ENCODE measurements at regions of chr14 and their contacts with region 1.

Region 1: DNA sequence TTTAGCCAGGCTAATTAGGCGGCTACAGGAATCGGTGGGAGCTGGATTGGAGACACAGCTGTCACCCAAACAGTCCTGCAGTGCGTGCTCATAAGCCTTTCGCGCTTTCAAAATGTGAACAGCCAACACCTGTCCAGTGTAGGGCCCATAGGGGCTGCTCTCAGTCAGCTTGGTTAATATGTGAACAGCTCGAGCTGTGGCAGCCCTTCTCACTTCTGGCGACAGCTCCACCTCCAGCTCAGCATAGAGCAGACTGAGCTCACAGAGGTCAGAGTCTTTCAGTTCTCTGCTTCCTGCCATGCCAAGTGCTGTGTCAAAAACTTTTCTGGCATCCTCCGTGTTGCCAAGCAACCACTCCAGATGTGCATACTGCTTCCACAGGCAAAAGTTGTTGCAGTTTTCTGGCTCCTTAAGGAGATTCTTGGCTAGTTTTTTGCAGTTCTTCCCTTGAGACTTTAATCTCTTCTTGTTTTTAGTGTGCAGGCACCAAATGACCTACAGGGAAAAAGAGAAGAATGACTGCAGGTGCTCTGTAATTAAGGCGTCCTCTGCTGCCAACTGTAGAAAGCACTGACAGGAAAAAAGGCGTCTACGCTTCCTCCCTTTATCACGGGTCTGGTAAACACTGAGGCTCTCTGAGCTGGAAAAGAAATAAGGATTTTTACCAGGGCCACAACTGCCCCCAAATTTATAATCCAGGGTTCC is 32.5 kb downstream of the PSMC1 start:
- DNase-seq: peak; percentile 38
- CTCF ChIP-seq: no peak

Region 2: DNA sequence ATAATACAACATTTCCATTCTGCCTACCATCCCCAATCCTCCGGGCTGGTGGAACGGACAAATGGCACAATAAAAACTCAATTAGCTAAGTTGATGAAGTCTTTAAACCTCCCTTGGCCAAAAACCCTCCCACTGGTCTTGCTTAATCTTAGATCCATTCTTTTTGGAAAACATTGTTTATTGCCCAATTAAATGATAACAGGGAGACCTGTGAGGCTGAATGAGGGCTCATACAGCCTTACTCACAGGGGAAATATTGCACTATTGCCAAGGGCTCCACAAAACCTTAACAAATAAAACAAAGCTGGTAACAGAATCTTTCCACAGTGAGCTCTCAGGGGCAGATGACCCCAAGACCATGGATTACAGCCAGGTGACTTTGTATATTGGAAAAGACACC is 40.2 kb before region 1 on chr14:
- CTCF ChIA-PET with region 1: no interaction called
- POLR2A ChIA-PET with region 1: interaction called, 10 read pairs
- DNase-seq: no peak
- CTCF ChIP-seq: no peak

Region 3: GRCh38 chr14:90301668-90302090 is 12.9 kb after region 1 on chr14:
- CTCF ChIA-PET with region 1: interaction called, 11 read pairs
- POLR2A ChIA-PET with region 1: no interaction called
- DNase-seq: no peak
- CTCF ChIP-seq: peak; percentile 41

Region 4: GRCh38 chr14:90331497-90332435 is 43.0 kb after region 1 on chr14 and contains the start of gene NRDE2:
- CTCF ChIA-PET with region 1: no interaction called
- POLR2A ChIA-PET with region 1: no interaction called
- DNase-seq: peak; percentile 96
- CTCF ChIP-seq: no peak

Region 5: DNA sequence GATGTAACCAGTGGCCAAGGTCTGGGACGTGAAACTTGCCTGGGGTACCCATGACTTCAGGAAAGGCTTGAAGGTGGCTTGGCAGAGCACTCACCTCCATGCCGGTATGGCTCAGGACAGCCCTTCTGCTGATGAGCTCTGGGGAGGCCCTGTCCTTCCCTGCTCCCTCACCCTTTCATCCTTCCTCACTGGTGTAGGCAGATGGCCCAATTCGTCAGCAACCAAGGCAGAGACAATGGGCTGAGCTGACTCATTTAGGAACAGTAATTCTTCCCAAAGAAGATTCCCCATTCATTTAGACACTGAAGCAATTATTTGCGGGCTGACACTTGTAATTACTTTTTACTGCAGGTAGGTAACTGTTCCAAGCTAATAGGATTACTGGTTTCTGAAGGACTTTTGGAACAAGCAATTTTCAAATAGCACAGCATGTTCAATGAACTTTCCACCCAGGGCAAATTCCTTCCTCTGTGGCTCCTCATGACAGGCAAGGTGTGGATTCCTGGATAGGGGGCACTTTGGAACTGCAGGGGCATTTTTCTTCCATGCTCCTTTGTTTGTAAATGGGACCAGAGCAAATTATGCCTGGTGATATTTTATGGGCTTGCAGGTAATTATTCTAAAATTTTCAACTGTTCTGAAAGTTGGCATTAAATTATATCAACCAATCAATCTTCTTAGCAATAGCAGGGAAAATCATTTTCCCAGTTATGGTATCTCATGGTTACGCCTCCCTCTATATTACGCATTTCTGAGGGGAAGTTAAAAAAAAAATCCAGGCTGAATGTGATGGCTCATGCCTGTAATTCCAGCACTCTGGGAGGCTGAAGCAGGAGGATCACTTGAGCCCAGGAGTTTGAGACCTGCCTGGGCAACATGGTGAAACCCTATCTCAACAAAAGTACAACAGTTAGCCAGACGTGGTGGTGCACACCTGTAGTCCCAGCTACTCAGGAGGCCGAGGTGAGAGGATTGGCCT is 67.0 kb after region 1 on chr14:
- CTCF ChIA-PET with region 1: no interaction called
- POLR2A ChIA-PET with region 1: no interaction called
- DNase-seq: no peak
- CTCF ChIP-seq: no peak

Measured in GM10248 (cell line).